GM13977 (cell line): ENCODE measurements at regions of chr2 and their contacts with region 1.

Region 1: GRCh38 chr2:148534416-148535204 is 109.9 kb upstream of the EPC2 start:
- DNase-seq: no peak
- CTCF ChIP-seq: no peak

Region 2: DNA sequence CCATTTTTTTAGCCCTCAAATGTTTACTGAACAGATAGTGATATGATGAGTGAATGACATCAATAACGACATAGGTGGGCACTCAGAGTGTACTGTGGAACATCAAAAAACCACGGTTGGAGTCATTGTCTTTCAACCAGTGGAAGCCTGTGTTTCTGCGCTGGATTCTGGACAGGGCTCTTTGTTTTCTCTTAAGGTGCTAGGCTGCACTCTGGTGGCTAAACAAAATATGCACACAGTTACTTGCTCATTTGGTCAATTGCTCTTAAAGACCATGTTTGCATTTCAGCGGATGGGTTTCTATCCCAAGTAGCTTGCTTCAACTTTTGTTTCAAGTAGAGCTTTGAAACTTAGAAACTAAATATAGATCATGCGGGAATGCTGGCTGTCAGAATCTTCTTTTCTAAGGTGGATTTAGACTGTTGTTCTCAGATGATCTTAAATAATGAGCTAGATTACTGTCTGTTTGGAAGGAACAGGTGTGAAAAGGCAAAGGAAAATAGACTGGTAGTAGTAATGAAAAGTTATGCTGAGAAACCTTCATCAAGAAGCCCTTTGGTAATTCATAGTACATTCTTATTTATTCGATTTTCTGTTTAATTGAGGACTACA is 455.4 kb after region 1 on chr2:
- in situ Hi-C with region 1: loop called (anchors 25 kb)
- DNase-seq: peak; percentile 78
- CTCF ChIP-seq: peak; percentile 69